Gastrocnemius medialis (tissue), 4 donors: ENCODE measurements at regions of chr6 and their contacts with region 1.

Region 1: GRCh38 chr6:168968228-168968627 is 285.4 kb downstream of the THBS2 start:
- DNase-seq: peak; percentile 47 to 49
- ATAC-seq: peak; percentile 87 to 97
- H3K4me3 ChIP-seq: no peak overlapping the region
- H3K27ac ChIP-seq: no peak overlapping the region
- H3K4me1 ChIP-seq: peaks cover 6 to 13% of the 10 kb centered on the region in 2 donors
- H3K27me3 ChIP-seq: no peaks in the 10 kb centered on the region
- CTCF ChIP-seq: no peak
- POLR2A ChIP-seq: no peak

Region 2: GRCh38 chr6:168676552-168677343 is 291.5 kb before region 1 on chr6:
- in situ Hi-C with region 1: no loop called
- intact Hi-C with region 1: no loop called
- DNase-seq: no peak
- ATAC-seq: no peak
- H3K4me3 ChIP-seq: no peak overlapping the region
- H3K27ac ChIP-seq: no peak overlapping the region
- H3K4me1 ChIP-seq: no peaks in the 10 kb centered on the region
- H3K27me3 ChIP-seq: no peaks in the 10 kb centered on the region
- CTCF ChIP-seq: no peak
- POLR2A ChIP-seq: no peak

Region 3: GRCh38 chr6:169141671-169142537 is 173.7 kb after region 1 on chr6:
- in situ Hi-C with region 1: no loop called
- intact Hi-C with region 1: loop called (anchors 10 kb)
- DNase-seq: peak; percentile 61 to 63
- ATAC-seq: peak; percentile 88 to 92
- H3K4me3 ChIP-seq: no peak overlapping the region
- H3K27ac ChIP-seq: peak overlapping the region in 3 of 4 donors; percentile 52 to 63 (median 53)
- H3K4me1 ChIP-seq: peaks cover 16 to 17% of the 10 kb centered on the region in 2 donors
- H3K27me3 ChIP-seq: no peaks in the 10 kb centered on the region
- CTCF ChIP-seq: no peak
- POLR2A ChIP-seq: no peak

Region 4: GRCh38 chr6:169212897-169213813 is 244.9 kb after region 1 on chr6:
- in situ Hi-C with region 1: no loop called
- intact Hi-C with region 1: loop called (anchors 10 kb)
- DNase-seq: peak; percentile 73 to 82
- ATAC-seq: peak; percentile 79 to 85
- H3K4me3 ChIP-seq: peak overlapping the region; percentile 38 to 66 (median 52)
- H3K27ac ChIP-seq: peak overlapping the region; percentile 48 to 80 (median 72)
- H3K4me1 ChIP-seq: peaks cover 5 to 11% of the 10 kb centered on the region in 2 donors
- H3K27me3 ChIP-seq: no peaks in the 10 kb centered on the region
- CTCF ChIP-seq: peak in 4 of 5 experiments; percentile 14 to 41 (median 28)
- POLR2A ChIP-seq: peak in 1 of 2 donors; percentile 18